Sigmoid colon (tissue), 7 donors: ENCODE measurements at regions of chr12 and their contacts with region 1.

Region 1: DNA sequence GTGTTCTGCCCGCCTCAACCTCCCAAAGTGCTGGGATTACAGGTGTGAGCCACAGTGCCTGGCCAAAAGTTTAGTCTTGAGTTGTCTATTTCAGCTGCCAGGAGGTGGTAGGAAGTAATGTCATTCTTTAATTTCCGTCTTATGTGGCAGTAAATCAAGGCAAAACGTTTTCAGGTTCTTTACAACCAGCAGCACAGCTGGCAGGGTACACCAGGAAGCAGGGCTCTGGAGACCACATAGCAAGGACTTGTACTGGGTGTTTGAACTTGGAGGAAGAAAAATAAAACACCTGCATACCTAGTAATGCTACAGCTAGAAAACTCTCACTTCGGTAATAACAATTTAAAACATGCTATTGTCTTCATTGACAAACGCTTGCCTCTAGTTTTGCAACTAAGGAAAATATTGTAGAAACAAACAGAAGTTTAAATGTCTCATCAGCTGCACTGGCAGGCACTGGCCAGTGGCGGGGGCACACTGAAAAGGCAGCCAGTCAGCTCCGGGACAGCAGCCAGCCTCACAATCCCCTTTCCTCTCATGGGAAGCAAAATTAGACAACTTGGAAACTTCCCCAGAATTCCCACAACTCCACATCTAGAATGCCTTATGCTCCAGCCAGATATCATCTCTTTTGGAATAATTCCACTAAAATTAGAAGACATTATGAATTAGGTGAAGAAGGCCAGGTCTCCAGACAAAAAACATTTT is 72.2 kb downstream of the CLIP1 start:
- DNase-seq: no peak
- H3K4me3 ChIP-seq: no peak overlapping the region
- H3K27ac ChIP-seq: peak overlapping the region; percentile 19 to 69 (median 63)
- H3K4me1 ChIP-seq: peaks cover 0 to 22% (median 17%) of the 10 kb centered on the region in 4 donors
- H3K27me3 ChIP-seq: no peaks in the 10 kb centered on the region
- CTCF ChIP-seq: peak; percentile 11 to 48 (median 27)
- EP300 ChIP-seq: no peak
- POLR2A ChIP-seq: no peak

Region 2: GRCh38 chr12:122282066-122282465 is 68.2 kb before region 1 on chr12:
- intact Hi-C with region 1: loop called (anchors 10 kb)
- DNase-seq: no peak
- H3K4me3 ChIP-seq: no peak overlapping the region
- H3K27ac ChIP-seq: no peak overlapping the region
- H3K4me1 ChIP-seq: peaks cover 0 to 7% (median 0%) of the 10 kb centered on the region in 4 donors
- H3K27me3 ChIP-seq: no peaks in the 10 kb centered on the region
- CTCF ChIP-seq: no peak
- EP300 ChIP-seq: no peak
- POLR2A ChIP-seq: no peak

Region 3: DNA sequence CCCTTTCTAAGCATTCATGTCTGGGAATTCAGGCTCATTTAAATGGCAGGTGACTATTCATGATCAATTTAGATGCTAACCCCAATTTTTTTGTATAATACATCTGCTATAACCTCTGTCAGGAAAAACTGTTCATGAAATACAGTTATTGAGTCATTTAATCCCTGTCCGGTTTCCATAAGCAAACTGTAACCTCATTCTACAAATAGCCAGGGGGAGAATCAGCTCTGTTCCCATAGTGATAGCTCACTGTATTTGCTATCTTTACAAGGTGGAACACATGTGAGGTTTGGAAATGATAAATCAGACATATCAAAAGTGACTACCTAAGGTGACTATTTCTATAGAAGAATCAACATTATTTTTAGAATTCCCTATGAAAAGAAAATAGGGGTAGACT is 45.4 kb before region 1 on chr12:
- intact Hi-C with region 1: loop called (anchors 5 kb)
- DNase-seq: no peak
- H3K4me3 ChIP-seq: no peak overlapping the region
- H3K27ac ChIP-seq: no peak overlapping the region
- H3K4me1 ChIP-seq: no peaks in the 10 kb centered on the region
- H3K27me3 ChIP-seq: no peaks in the 10 kb centered on the region
- CTCF ChIP-seq: no peak
- EP300 ChIP-seq: no peak
- POLR2A ChIP-seq: no peak